Prostate gland (tissue), 2 donors: ENCODE measurements at regions of chr3 and their contacts with region 1.

Region 1: GRCh38 chr3:123028233-123028828 is 768 bp upstream of the SEMA5B start:
- DNase-seq: peak; percentile 25
- H3K4me3 ChIP-seq: peak overlapping the region; percentile 26 to 45
- H3K27ac ChIP-seq: no peak overlapping the region
- H3K4me1 ChIP-seq: no peaks in the 10 kb centered on the region
- H3K27me3 ChIP-seq: no peaks in the 10 kb centered on the region
- CTCF ChIP-seq: peak in 2 of 4 experiments; percentile 51 to 60
- POLR2A ChIP-seq: no peak

Region 2: GRCh38 chr3:122754929-122755328 is 273.4 kb before region 1 on chr3:
- intact Hi-C with region 1: loop called (anchors 5 kb)
- DNase-seq: no peak
- H3K4me3 ChIP-seq: no peak overlapping the region
- H3K27ac ChIP-seq: no peak overlapping the region
- H3K4me1 ChIP-seq: no peaks in the 10 kb centered on the region
- H3K27me3 ChIP-seq: no peaks in the 10 kb centered on the region
- CTCF ChIP-seq: peak; percentile 37 to 71 (median 46)
- POLR2A ChIP-seq: no peak

Region 3: DNA sequence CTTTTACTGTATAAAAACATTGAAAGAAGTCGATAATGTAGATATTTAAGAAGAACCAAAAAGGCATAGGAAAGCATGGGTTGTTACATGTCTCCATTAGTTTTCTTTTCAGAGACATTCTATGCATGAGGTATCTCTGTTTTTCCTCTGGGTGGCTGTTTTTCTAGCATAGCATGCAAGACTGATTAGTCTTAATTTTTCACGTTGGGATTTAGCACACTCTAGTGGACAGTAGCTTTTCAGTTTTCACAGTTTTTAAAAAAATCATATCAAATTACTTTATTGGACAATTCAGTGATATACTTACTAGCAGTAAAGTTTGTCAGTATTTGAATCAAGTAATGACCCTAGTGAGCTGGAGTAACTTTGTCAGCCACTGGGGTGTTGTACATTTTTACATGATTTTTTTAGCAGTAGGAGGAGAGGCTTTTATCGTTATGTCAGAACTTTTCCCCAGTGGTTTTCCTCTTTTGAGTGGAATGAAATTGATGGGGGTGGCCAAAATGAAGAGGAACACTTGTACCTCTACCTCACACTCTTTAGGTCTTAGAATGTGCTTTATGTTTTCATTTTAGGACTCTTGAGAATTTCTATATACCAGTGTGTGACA is 230.6 kb after region 1 on chr3:
- intact Hi-C with region 1: loop called (anchors 10 kb)
- DNase-seq: no peak
- H3K4me3 ChIP-seq: no peak overlapping the region
- H3K27ac ChIP-seq: no peak overlapping the region
- H3K4me1 ChIP-seq: no peaks in the 10 kb centered on the region
- H3K27me3 ChIP-seq: no peaks in the 10 kb centered on the region
- CTCF ChIP-seq: peak in 3 of 4 experiments; percentile 52 to 80 (median 79)
- POLR2A ChIP-seq: no peak